ENCODE measurements at regions of chrX and their contacts with region 1.

Region 1: GRCh38 chrX:14528629-14529289 is 577 bp upstream of the GLRA2 start:
- DNase-seq: peak; percentile 82
- H3K4me3 Mint-ChIP-seq: peak overlapping the region; percentile 42
- H3K27ac Mint-ChIP-seq: no peak overlapping the region
- H3K4me1 Mint-ChIP-seq: peaks cover 2% of the 10 kb centered on the region
- H3K27me3 Mint-ChIP-seq: peaks cover 3% of the 10 kb centered on the region

Region 2: DNA sequence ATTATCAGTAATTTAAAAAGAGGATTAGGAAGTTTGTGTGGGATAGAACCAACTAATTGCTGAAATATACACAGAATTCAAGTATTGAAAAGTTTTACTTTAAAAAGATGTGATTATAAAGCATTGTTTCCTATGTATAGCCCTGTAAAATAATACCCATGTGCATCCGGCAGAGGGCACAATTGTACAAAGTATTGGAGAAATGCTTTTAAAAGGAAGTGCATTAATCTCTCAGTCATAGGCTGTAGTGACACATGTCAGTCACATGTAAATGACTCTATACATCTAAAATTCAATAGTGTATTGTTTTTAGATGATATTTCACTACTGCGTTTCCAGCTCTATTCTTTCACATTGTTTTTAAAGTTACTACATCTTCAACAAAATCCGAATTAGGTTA is 489.4 kb before region 1 on chrX:
- intact Hi-C with region 1: loop called (anchors 1 kb)
- DNase-seq: peak; percentile 84
- H3K4me3 Mint-ChIP-seq: no peak overlapping the region
- H3K27ac Mint-ChIP-seq: no peak overlapping the region
- H3K4me1 Mint-ChIP-seq: no peaks in the 10 kb centered on the region
- H3K27me3 Mint-ChIP-seq: peaks cover 16% of the 10 kb centered on the region

Region 3: DNA sequence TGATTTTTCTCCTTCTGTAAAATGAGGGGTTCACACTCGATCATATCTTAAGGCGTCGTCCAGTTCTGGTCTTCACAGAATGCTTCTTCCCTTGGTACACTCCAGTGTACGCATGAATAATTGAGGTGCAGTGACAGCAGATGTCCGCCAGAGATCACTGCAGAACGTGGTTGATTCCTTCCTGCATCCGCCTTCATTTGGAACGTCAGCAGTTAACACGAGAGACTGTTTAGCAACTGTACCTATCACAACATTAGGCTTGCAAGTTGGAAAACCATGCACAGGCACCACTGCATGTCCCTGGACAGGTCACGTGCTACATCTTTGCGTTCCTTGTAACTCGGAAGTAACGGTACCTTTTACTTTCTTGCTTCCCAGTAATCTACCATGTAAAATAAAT is 433.1 kb before region 1 on chrX:
- intact Hi-C with region 1: loop called (anchors 2 kb)
- DNase-seq: peak; percentile 76
- H3K4me3 Mint-ChIP-seq: no peak overlapping the region
- H3K27ac Mint-ChIP-seq: no peak overlapping the region
- H3K4me1 Mint-ChIP-seq: no peaks in the 10 kb centered on the region
- H3K27me3 Mint-ChIP-seq: peaks cover 1% of the 10 kb centered on the region

Measured in activated CD4-positive, alpha-beta T cell treated with anti-CD3 and anti-CD28 coated beads, Interleukin-2, amount 10 ng/mL, durations not matched to agents 24 days and 14 days (primary cell).